Breast epithelium (tissue), 4 donors: ENCODE measurements at regions of chr16 and their contacts with region 1.

Region 1: DNA sequence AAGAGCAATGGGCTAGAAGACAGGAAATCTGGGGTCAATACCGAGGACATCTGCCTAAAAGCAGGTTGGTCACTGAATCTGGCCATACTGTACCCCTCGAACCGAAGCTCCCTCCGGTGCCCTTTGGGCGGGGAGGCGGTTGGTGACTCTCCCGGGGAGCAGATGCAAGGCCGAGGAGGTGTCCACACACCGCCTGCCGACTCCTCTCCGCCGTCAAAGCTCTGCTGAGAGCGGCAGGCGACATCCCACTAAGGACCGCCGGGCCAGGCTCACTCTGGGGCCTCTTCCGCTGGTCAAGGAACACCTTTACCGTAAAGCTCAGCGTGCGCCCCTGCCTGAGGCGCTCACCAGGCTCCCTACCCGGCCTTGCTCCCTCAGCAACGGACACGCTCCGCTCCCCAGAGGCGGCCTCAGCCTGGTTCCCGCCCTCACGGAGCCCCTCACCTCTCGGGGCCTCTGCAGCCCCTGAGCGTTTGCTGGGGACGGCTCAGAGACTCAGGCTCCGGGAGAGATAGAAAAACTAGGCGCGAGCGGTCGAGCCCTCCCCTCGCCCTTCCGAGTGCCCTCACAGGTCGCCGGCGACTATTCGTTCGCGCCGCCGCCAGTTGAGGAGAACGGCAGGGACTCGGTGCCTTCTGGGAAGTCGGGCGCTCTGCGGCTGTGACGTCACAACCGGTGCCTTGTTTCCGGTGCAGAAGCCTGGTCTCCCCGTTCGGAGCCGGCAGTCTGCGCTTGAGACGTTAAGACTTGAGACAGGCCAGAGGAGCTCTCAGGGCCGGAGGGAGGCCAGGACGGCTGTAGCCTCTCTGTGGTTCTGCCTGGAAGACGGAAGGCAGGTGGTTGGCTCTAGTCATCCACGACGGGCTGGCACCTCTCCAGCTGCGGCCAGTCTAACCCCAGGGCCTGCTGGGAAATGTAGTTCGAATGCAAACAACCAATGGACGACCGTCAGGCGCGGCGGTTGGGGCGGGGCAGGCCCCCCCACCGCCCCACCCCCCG is at the start of gene ZNF200:
- DNase-seq: peak; percentile 95
- H3K4me3 ChIP-seq: peak within 1 kb of the TSS; percentile 71 to 92 (median 88)
- H3K27ac ChIP-seq: peak within 1 kb of the TSS; percentile 95 to 99
- H3K4me1 ChIP-seq: no peaks in the 10 kb centered on the region
- H3K27me3 ChIP-seq: no peaks in the 10 kb centered on the region
- CTCF ChIP-seq: peak in 1 of 3 donors; percentile 14
- POLR2A ChIP-seq: no peak
- total RNA-seq, gene ZNF200: 3.5 to 11.1 (median 9.2) TPM

Region 2: DNA sequence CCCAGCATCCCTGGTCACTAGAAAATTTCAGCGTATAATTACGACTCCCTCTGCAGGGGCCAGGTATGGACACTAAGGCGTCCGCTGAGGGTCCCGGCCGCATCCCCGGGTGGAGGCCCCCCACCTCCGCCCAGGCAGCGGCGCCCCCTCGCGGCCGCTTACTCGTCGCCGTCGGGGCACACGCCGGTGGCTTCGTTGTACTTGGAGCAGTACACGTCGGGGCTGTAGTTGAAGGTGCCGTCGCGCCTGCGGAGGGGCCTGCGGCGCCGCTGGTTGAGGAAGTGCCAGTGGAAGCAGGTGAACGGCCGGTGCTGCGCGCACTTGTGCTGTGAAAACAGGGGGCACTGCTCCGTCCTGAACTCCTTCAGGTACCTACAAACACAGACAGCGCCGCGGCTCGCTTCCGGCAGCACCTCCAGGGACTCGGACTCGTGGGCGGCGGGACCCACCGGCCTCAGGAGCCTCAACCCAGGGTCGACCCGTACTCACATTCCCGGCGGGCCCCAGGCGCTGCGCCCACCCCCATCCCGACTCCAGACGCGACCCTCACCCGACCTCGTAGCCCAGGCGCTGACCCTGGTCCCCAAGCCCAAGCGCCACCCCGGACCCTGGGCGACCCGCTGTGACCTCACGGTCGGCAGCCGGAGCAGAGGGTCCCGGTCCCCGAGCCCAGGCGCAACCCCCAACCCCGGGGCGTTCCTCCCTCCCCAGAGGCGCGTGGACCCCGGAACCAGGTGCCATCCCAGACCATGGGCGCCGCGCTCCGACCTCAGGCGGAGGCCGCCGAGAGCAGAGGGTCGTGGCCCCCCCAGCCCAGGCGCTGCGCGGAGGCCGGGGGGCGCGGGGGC is 1820.9 kb before region 1 on chr16:
- intact Hi-C with region 1: no loop called
- DNase-seq: peak in 1 of 2 donors; percentile 65
- H3K4me3 ChIP-seq: peak overlapping the region; percentile 81 to 99 (median 90)
- H3K27ac ChIP-seq: peak overlapping the region; percentile 88 to 96
- H3K4me1 ChIP-seq: peaks cover under 1 to 5% of the 10 kb centered on the region in 2 donors
- H3K27me3 ChIP-seq: no peaks in the 10 kb centered on the region
- CTCF ChIP-seq: peak in 2 of 3 donors; percentile 42 to 44
- POLR2A ChIP-seq: no peak

Region 3: GRCh38 chr16:2278272-2278608 is 956.6 kb before region 1 on chr16:
- intact Hi-C with region 1: no loop called
- DNase-seq: no peak
- H3K4me3 ChIP-seq: no peak overlapping the region
- H3K27ac ChIP-seq: no peak overlapping the region
- H3K4me1 ChIP-seq: no peaks in the 10 kb centered on the region
- H3K27me3 ChIP-seq: no peaks in the 10 kb centered on the region
- CTCF ChIP-seq: no peak
- POLR2A ChIP-seq: no peak

Region 4: DNA sequence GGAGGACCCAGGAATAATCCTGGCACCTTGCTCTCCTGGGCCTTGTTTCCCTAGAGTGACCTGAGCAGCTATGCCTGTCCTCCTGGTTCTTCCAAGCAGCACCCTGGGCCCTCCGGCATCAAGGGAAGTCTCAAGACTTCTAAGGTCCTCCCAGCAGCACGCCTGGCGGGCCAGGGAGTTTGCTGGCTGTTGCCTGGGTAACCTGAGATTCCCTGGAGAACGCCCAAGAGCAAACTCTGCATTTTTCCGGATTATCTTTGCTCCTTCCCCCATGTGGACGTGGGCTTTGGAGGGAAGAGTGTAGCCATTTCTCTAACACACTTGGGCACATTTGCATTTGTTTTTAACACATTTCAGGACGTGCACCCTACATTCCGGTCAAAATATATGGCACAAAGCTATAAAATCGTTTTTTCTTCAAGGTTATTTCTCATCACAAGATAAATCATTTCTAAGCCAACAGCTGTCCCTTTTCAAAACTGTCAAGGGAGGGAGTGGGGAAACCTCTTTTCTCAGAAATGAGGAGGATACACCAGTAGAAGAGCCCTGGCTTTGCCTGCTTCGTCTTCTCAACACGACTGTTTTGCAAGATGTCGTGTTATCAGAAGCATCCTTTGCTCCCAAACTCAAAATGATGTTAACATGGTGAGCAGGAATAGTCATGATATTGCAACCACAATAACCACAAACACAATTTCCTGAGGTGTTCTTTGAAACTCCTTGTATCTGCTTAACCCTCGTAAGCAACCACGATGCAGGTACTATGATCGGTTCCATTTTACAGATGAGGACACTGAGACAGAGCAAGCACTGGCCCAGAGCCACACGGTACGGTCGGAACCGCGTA is 764.9 kb after region 1 on chr16:
- intact Hi-C with region 1: loop called (anchors 10 kb)
- DNase-seq: no peak
- H3K4me3 ChIP-seq: no peak overlapping the region
- H3K27ac ChIP-seq: peak overlapping the region; percentile 50 to 62
- H3K4me1 ChIP-seq: peaks cover 0 to 6% of the 10 kb centered on the region in 2 donors
- H3K27me3 ChIP-seq: no peaks in the 10 kb centered on the region
- CTCF ChIP-seq: no peak
- POLR2A ChIP-seq: no peak